Activated CD4-positive, alpha-beta memory T cell treated with anti-CD3 and anti-CD28 coated beads, Interleukin-2, amount 10 ng/mL, durations not matched to agents 7 days and 5 days (primary cell): ENCODE measurements at regions of chr3 and their contacts with region 1.

Region 1: GRCh38 chr3:46976326-46977190 is at the start of gene CCDC12:
- DNase-seq: peak; percentile 96
- H3K4me3 Mint-ChIP-seq: peak within 1 kb of the TSS; percentile 99
- H3K27ac Mint-ChIP-seq: peak within 1 kb of the TSS; percentile 93
- H3K4me1 Mint-ChIP-seq: peaks cover 64% of the 10 kb centered on the region
- H3K27me3 Mint-ChIP-seq: no peaks in the 10 kb centered on the region
- total RNA-seq, gene CCDC12: 55.0 to 56.7 TPM

Region 2: GRCh38 chr3:46935168-46935858 is 41.2 kb before region 1 on chr3:
- CTCF ChIA-PET with region 1: no interaction called
- POLR2A ChIA-PET with region 1: interaction called, 21 read pairs
- DNase-seq: no peak
- H3K4me3 Mint-ChIP-seq: no peak overlapping the region
- H3K27ac Mint-ChIP-seq: no peak overlapping the region
- H3K4me1 Mint-ChIP-seq: peaks cover 63% of the 10 kb centered on the region
- H3K27me3 Mint-ChIP-seq: no peaks in the 10 kb centered on the region

Region 3: GRCh38 chr3:46953234-46954010 is 23.1 kb before region 1 on chr3:
- CTCF ChIA-PET with region 1: interaction called, 6 read pairs
- POLR2A ChIA-PET with region 1: interaction called, 64 read pairs
- DNase-seq: no peak
- H3K4me3 Mint-ChIP-seq: peak overlapping the region; percentile 41
- H3K27ac Mint-ChIP-seq: peak overlapping the region; percentile 82
- H3K4me1 Mint-ChIP-seq: peaks cover 84% of the 10 kb centered on the region
- H3K27me3 Mint-ChIP-seq: no peaks in the 10 kb centered on the region

Region 4: DNA sequence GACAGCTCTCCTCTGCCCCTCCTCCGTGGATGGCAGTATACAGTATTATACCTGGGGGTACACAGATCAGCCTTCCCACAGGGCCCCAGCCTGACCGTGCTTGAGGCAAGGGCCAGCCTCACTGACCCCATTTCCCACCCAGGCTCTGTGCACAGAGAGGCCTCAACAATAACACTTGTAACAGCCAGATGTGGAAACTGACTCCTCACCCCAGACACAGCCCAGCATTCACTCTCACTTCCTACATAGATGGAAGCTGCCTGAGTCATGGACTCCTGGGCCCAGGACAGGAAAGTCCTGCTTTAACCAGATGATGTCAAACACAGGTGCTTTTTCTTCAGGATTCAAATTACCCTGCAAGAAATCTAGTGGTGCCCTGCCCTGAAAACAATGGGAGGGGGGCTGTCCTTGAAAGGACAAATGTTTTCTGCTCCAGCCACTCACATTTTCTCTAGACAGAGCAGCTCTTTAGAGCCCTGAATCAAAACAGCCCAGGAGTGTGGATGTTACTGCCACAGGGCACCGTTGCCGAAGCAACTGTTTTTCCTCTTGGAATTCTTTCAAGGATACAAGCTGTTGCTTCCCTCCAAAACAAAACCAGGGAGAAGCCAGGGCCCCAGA is 16.4 kb before region 1 on chr3:
- CTCF ChIA-PET with region 1: interaction called, 9 read pairs
- POLR2A ChIA-PET with region 1: interaction called, 42 read pairs
- DNase-seq: no peak
- H3K4me3 Mint-ChIP-seq: no peak overlapping the region
- H3K27ac Mint-ChIP-seq: peak overlapping the region; percentile 77
- H3K4me1 Mint-ChIP-seq: peaks cover 73% of the 10 kb centered on the region
- H3K27me3 Mint-ChIP-seq: no peaks in the 10 kb centered on the region

Region 5: GRCh38 chr3:46987743-46988401 is 11.3 kb after region 1 on chr3:
- CTCF ChIA-PET with region 1: interaction called, 7 read pairs
- POLR2A ChIA-PET with region 1: interaction called, 52 read pairs
- DNase-seq: peak; percentile 94
- H3K4me3 Mint-ChIP-seq: peak overlapping the region; percentile 81
- H3K27ac Mint-ChIP-seq: peak overlapping the region; percentile 89
- H3K4me1 Mint-ChIP-seq: peaks cover 82% of the 10 kb centered on the region
- H3K27me3 Mint-ChIP-seq: no peaks in the 10 kb centered on the region